ENCODE measurements at regions of chr19 and their contacts with region 1.

Region 1: DNA sequence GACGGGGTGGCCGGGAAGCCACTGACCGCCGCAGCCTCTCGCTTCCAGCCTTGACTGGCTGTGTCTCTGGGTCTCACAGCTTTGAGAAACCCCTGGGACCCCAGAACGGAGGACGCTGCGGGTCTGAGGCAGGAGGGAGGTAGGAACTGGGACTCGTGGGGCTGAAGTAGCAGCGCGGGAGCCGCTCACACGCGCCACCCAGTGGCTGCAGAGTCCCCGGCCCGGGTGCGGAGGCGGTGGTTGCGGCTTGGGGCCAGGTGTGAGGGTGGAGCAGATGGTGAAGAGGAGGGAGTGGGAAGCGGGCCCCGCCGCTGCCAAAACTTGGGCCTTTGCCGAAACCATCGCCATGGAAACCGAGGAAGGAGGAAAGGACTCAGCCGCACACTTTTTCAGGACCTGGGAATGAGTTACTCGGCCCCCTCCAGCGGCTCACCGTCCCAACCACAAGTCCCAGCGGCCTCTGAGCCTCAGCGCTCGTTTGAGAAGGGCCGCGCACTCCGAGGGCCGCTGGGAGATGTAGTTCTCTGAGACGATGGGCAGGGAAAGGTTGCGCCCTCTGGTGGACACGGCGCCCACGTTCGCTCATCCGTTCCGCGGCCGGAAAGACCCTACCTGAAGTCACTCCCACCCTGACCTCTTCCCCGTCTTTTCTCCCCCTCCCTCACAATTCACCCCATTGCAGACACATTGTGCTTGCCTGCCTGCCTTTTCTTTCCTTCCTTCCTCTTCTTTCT is 2.2 kb upstream of the SLC17A7 start:
- DNase-seq: peak; percentile 98
- H3K4me3 ChIP-seq: peak overlapping the region; percentile 68
- H3K27ac ChIP-seq: peak overlapping the region; percentile 82
- H3K4me1 ChIP-seq: peaks cover 29% of the 10 kb centered on the region
- H3K27me3 ChIP-seq: peaks cover 27% of the 10 kb centered on the region
- CTCF ChIP-seq: peak; percentile 94

Region 2: GRCh38 chr19:49224856-49225255 is 218.7 kb before region 1 on chr19:
- CTCF ChIA-PET with region 1: no interaction called
- POLR2A ChIA-PET with region 1: no interaction called
- intact Hi-C with region 1: loop called (anchors 5 kb)
- DNase-seq: peak; percentile 91
- H3K4me3 ChIP-seq: no peak overlapping the region
- H3K27ac ChIP-seq: peak overlapping the region; percentile 22
- H3K4me1 ChIP-seq: peaks cover 25% of the 10 kb centered on the region
- H3K27me3 ChIP-seq: no peaks in the 10 kb centered on the region
- CTCF ChIP-seq: peak; percentile 82

Region 3: DNA sequence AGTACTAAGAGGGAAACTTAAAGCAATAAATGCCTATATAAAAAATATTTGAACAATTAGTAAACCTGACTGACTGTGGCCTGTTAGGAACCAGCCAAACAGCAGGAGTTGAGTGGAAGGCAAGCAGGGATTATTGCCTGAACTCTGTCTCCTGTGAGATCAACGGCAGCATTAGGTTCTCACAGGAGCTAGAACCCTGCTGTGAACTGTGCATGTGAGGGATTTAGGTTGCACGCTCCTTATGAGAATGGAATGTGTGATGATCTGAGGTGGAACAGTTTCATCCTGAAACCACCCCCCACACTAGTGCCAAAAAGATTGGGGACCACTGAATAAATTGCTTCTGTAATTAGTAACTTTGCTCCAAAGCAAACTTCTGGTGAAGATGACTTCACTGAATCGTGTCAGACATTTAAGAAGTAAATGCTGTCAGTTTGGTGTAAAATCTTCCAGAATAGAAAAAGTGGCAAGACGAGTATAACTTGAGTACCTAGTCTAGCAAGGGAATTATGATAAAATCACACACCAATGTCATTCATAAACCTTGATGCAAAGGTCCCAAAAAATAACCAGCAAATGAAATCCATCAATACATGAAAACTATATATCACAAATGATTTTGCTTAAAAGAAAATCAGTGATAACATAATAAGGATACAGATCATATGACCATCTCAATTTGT is 172.3 kb before region 1 on chr19:
- CTCF ChIA-PET with region 1: no interaction called
- POLR2A ChIA-PET with region 1: no interaction called
- intact Hi-C with region 1: loop called (anchors 1 kb)
- DNase-seq: no peak
- H3K4me3 ChIP-seq: no peak overlapping the region
- H3K27ac ChIP-seq: no peak overlapping the region
- H3K4me1 ChIP-seq: no peaks in the 10 kb centered on the region
- H3K27me3 ChIP-seq: no peaks in the 10 kb centered on the region
- CTCF ChIP-seq: no peak

Region 4: DNA sequence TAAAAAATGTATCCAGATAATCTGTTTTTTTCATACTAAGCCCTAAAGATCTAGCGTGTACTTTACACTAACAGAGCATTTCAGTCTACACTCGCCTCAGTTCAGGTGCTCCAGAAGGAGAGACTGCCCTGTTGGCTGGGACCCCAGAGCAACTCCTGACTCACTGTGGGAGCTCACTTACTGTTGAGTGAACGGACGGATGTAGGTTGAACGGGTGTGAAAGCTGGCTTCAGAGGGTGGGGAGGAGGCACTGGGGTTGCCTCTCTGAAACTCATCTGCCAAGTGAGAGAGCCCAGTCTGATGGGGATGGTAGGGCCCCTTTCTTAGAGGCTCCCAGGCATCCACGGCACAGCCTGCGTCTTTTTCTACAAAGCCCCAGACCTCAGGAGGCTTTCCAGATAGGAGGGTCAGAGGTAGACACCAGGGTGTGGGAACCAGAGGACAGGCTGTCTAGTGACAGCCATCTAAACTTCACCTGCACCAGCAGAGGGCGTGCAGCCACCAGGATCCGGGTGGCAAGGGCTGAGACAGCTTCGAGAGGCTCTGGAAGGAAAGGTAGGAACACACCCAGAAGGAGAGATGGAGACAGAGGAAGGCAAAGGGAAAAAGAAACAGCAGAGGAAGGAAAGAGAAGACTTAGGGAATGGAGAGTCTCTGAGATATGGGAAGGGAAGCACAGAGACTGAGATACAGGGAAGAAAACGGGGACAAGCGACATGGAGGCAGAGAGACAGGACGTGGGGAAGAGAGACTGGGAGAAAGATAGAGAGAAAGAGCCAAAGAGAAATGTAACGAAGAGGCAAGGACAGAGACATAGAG is 51.7 kb before region 1 on chr19:
- CTCF ChIA-PET with region 1: interaction called, 10 read pairs
- POLR2A ChIA-PET with region 1: no interaction called
- intact Hi-C with region 1: loop called (anchors 1 kb)
- DNase-seq: peak; percentile 89
- H3K4me3 ChIP-seq: no peak overlapping the region
- H3K27ac ChIP-seq: no peak overlapping the region
- H3K4me1 ChIP-seq: no peaks in the 10 kb centered on the region
- H3K27me3 ChIP-seq: no peaks in the 10 kb centered on the region
- CTCF ChIP-seq: peak; percentile 98

Region 5: DNA sequence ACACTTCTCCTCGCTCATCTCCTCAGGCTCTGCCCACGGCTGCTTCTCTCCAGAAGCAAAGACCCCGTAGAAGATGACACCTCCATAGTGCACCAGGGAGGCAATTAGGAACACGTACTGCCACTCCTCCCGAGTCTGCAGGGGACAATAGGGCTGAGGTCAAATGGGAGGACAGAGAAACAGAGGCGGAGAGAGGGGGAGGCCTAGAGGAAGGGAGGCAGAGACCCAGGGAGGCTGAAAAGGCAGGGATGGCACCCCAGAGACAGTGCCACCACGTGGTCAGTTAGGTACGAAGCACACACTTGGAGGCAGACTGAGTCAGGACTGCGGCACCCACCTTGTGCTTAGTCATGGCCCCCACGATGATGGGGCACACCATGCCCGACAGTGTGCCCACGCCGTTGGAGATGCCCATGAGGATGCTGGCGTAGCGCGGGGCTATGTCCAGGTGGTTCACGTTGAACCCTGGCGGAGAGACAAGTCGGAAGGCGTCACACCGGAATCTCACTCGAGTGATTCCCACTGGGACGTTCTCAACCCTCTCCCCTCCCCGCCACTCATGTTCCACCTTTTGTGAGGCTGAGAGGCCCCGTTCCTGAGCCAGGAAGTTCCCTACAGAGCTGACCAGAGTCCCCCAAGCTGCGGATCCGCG is 12.7 kb before region 1 on chr19:
- CTCF ChIA-PET with region 1: interaction called, 18 read pairs
- POLR2A ChIA-PET with region 1: no interaction called
- intact Hi-C with region 1: no loop called
- DNase-seq: no peak
- H3K4me3 ChIP-seq: no peak overlapping the region
- H3K27ac ChIP-seq: no peak overlapping the region
- H3K4me1 ChIP-seq: peaks cover 9% of the 10 kb centered on the region
- H3K27me3 ChIP-seq: peaks cover 29% of the 10 kb centered on the region
- CTCF ChIP-seq: peak; percentile 64

Region 6: GRCh38 chr19:49475995-49476880 is 32.7 kb after region 1 on chr19:
- CTCF ChIA-PET with region 1: interaction called, 10 read pairs
- POLR2A ChIA-PET with region 1: no interaction called
- intact Hi-C with region 1: no loop called
- DNase-seq: peak; percentile 83
- H3K4me3 ChIP-seq: no peak overlapping the region
- H3K27ac ChIP-seq: no peak overlapping the region
- H3K4me1 ChIP-seq: peaks cover 10% of the 10 kb centered on the region
- H3K27me3 ChIP-seq: no peaks in the 10 kb centered on the region
- CTCF ChIP-seq: peak; percentile 83

Region 7: DNA sequence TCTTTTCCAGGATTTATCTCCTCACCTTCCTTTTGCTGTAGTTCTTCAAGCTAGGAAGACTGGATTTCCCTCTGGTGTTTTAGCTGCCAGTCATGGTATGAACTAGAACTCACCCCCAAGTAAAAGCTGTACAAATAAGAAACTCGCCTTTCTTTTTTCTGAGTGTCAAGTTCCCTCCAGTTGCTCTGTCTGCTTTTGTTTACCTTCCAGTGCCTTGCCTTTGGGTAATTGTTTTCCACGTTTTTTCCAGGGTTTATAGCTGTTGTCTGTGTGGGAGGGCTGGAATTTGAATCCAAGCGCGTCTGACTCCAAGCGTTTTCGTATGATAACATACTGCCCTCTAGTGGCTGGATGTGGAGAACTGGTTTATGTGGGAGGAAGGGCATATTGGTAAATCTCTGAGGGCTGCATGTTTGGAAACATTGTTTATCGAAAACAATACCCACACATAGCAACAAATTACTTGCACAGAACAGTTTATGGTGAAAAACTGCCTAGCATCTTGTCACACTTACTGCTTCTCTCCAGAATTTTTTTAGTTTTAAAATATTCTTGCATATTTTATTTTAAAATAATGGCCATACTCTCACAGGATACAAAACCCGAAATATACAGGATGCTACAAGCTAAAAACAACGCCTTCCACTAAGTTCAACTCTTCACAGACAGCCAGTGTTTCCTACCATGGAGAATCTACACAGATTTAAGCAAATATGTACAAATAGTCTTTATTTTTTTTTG is 103.5 kb after region 1 on chr19:
- CTCF ChIA-PET with region 1: interaction called, 10 read pairs
- POLR2A ChIA-PET with region 1: no interaction called
- intact Hi-C with region 1: no loop called
- DNase-seq: peak; percentile 95
- H3K4me3 ChIP-seq: no peak overlapping the region
- H3K27ac ChIP-seq: peak overlapping the region; percentile 14
- H3K4me1 ChIP-seq: peaks cover 4% of the 10 kb centered on the region
- H3K27me3 ChIP-seq: no peaks in the 10 kb centered on the region
- CTCF ChIP-seq: peak; percentile 86